ENCODE measurements at regions of chr7 and their contacts with region 1.

Region 1: DNA sequence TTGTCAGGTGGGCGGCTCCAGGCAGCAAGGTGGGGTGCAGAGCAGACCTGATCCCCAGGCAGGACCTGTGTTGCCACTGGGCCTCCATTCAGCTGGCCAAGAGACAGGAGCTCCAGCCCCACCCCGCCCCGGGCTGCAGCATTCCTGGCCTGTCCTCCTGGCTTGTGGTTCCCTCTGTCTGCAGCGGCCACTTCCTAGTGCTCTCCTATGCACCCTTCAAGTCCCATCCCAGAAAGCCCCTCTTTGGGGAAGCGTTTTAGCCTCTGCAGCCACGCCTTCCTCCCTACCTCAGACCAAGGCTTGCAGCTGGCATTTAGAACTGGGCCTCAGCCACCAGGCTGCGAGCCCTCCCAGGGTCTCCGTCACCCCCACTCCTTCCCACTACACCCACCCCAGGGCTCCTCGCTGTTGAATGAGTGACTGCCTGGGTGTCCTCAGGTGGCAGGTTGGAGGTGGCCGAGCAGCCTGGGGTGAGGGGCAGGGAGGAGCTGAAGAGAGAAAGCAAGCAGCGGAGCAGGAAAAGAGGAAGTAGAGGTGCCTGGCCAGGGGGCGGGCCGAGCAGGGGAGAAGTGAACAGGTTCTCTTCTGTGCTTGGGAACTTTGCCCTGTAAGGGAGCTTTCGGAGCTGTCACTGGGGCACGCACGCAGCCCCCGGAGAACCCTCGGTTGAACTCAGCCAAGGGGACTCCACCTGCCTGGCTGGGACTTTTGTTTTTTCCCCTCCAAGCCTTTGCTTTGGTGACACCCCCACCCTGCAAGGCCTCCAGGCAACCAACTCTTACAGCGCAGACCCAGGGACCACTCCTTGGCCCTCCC is 109.1 kb upstream of the TNRC18 start:
- DNase-seq: peak in 8 of 10 donors; percentile 35 to 73 (median 48)
- ATAC-seq: peak in 1 of 2 donors; percentile 3
- H3K4me3 Mint-ChIP-seq: peak overlapping the region; percentile 92 to 99 (median 96)
- H3K27ac Mint-ChIP-seq: peak overlapping the region; percentile 93 to 99 (median 96)
- H3K4me1 Mint-ChIP-seq: peaks cover 22 to 43% (median 30%) of the 10 kb centered on the region in 4 donors
- H3K27me3 Mint-ChIP-seq: no peaks in the 10 kb centered on the region

Region 2: GRCh38 chr7:5549096-5549763 is 16.5 kb after region 1 on chr7:
- POLR2A ChIA-PET with region 1: interaction called, 32 read pairs
- DNase-seq: no peak
- ATAC-seq: no peak
- H3K4me3 Mint-ChIP-seq: peak overlapping the region in 1 of 10 donors; percentile 37
- H3K27ac Mint-ChIP-seq: peak overlapping the region in 3 of 10 donors; percentile 34 to 66 (median 40)
- H3K4me1 Mint-ChIP-seq: peaks cover 3 to 8% (median 7%) of the 10 kb centered on the region in 4 donors
- H3K27me3 Mint-ChIP-seq: no peaks in the 10 kb centered on the region